PC-3 (cell line): ENCODE measurements at regions of chr2 and their contacts with region 1.

Region 1: GRCh38 chr2:85813982-85814801 is 60.4 kb downstream of the ATOH8 start:
- DNase-seq: peak; percentile 91
- ATAC-seq: peak; percentile 97
- H3K4me3 ChIP-seq: no peak overlapping the region
- H3K27ac ChIP-seq: no peak overlapping the region
- H3K4me1 ChIP-seq: peaks cover 4% of the 10 kb centered on the region; the same call in 1 of the 2 replicates
- H3K27me3 ChIP-seq: no peaks in the 10 kb centered on the region; the same call in 1 of the 2 replicates
- CTCF ChIP-seq: peak; percentile 96

Region 2: DNA sequence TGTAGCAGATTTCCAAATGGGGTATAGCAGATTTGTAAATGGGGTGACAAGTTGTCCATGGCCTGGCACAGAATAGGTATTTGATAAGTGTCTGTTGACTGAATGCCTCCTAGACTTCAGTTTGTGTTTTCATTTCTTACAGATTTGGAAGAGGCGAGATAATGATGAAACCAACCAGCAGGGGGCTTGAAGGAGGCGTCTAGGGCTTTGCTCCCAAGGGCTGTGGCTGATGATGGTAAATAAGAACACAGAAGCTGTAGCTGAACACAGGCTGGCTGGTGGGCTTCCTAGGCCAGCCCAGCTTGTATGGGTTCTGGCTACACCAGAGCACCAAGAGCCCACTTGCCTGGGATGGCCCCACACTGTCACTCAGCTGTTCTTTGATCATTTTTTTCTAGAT is 165.6 kb before region 1 on chr2:
- CTCF ChIA-PET with region 1: no interaction called
- POLR2A ChIA-PET with region 1: no interaction called
- intact Hi-C with region 1: loop called (anchors 10 kb)
- DNase-seq: peak; percentile 51
- ATAC-seq: peak; percentile 41
- H3K4me3 ChIP-seq: no peak overlapping the region
- H3K27ac ChIP-seq: peak overlapping the region; percentile 82
- H3K4me1 ChIP-seq: peaks cover 27% of the 10 kb centered on the region
- H3K27me3 ChIP-seq: no peaks in the 10 kb centered on the region
- CTCF ChIP-seq: peak; percentile 74

Region 3: DNA sequence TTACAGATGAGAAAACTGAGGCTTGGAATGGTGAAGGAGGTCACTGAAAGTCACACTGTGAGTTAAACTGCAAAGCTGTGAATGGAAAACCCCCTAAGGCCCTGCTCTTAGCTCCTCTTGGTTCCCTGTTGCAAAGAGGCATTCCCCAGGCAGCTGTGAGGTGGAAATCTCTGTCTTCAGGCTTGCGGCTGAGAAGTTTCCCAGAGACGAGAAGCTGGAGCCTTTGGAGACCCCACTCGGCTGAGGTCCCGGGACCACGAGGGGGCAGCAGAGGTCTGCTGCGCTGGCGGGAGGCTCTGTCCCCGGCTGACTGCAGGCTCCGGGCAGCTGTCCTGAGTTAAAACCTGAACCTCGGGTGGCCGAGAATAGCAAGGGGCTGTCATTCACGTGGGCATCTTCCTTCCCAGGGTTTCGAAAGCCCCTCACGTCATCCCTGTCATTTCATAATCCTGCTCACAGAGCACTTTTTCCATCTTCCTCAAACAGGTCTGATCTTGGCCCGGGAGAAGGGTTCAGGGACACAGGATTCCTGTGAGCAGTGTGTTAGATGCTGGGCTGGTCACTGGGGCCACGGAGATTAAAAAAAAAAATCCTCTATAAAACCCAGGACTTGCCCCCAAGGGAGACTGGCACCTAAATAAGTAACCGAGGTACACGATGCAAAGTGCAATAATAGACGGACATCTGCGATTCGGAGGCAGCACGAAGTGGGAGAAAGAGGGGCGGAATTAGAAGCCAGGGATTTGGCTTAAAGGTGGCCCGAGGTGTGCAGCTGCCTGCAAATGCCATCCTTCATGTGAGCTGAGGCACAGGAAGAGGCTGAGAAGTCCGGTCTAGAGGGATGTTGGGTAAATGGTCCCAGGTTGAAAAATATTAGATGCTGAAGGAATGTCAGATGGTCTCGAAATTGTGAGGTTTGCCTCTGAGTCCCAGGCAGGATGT is 85.0 kb before region 1 on chr2:
- CTCF ChIA-PET with region 1: interaction called, 14 read pairs
- POLR2A ChIA-PET with region 1: no interaction called
- intact Hi-C with region 1: loop called (anchors 1 kb)
- DNase-seq: peak; percentile 83
- ATAC-seq: peak; percentile 100
- H3K4me3 ChIP-seq: no peak overlapping the region
- H3K27ac ChIP-seq: no peak overlapping the region
- H3K4me1 ChIP-seq: no peaks in the 10 kb centered on the region
- H3K27me3 ChIP-seq: peaks cover 5% of the 10 kb centered on the region; the same call in 1 of the 2 replicates
- CTCF ChIP-seq: peak; percentile 95

Region 4: GRCh38 chr2:85750587-85751575 is 63.3 kb before region 1 on chr2:
- CTCF ChIA-PET with region 1: interaction called, 6 read pairs
- POLR2A ChIA-PET with region 1: no interaction called
- intact Hi-C with region 1: loop called (anchors 1 kb)
- DNase-seq: peak; percentile 67
- ATAC-seq: peak; percentile 77
- H3K4me3 ChIP-seq: no peak overlapping the region
- H3K27ac ChIP-seq: no peak overlapping the region
- H3K4me1 ChIP-seq: peaks cover 6% of the 10 kb centered on the region
- H3K27me3 ChIP-seq: peaks cover 60% of the 10 kb centered on the region
- CTCF ChIP-seq: peak; percentile 92

Region 5: GRCh38 chr2:85772019-85772745 is 42.0 kb before region 1 on chr2:
- CTCF ChIA-PET with region 1: interaction called, 5 read pairs
- POLR2A ChIA-PET with region 1: interaction called, 4 read pairs
- intact Hi-C with region 1: loop called (anchors 1 kb)
- DNase-seq: peak; percentile 97
- ATAC-seq: peak; percentile 93
- H3K4me3 ChIP-seq: peak overlapping the region; percentile 40; the same call in 1 of the 2 replicates
- H3K27ac ChIP-seq: no peak overlapping the region; the same call in 1 of the 2 replicates
- H3K4me1 ChIP-seq: peaks cover 18% of the 10 kb centered on the region
- H3K27me3 ChIP-seq: no peaks in the 10 kb centered on the region
- CTCF ChIP-seq: peak; percentile 33; the same call in 1 of the 2 replicates

Region 6: DNA sequence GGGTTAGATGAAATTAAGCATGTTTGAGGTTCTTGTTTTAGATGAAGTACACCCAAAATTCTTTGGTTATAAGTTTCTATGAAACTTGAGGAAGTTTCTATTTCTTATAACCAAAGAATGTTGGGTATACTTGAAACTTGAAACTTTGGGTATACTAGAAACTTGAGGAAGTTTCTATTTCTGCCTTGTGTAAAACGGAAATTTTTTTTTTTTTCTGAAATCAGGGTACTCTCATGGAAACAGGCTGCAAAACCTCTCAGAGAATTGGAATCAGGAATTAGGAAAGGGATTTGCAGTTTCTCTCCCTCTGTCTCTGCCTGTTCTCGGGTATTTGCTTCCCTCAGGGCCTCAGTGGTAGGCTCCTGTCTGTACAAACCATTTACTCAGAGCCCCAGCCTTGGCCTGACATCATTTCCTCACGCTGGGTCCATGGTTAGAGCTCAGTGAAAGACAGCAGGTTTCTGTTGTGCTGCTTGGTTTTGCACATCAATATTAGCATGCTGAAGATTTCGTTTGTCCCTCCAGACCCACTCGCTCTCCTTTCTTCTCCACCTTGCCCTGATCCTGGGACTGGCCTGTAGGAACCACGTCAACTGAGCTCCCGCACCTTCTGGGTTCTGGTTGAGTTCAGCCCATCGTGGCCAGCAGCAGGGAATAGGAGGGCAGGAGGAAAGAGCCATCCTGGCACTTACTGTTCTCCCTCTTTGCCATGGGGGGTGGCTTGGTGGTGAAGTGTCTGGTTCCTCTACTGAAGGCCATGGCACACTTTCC is 185.1 kb after region 1 on chr2:
- CTCF ChIA-PET with region 1: no interaction called
- POLR2A ChIA-PET with region 1: no interaction called
- intact Hi-C with region 1: no loop called
- DNase-seq: no peak
- ATAC-seq: no peak
- H3K4me3 ChIP-seq: no peak overlapping the region
- H3K27ac ChIP-seq: no peak overlapping the region
- H3K4me1 ChIP-seq: peaks cover 1% of the 10 kb centered on the region; the same call in 1 of the 2 replicates
- H3K27me3 ChIP-seq: no peaks in the 10 kb centered on the region
- CTCF ChIP-seq: no peak